A549 (cell line): ENCODE measurements at regions of chr11 and their contacts with region 1.

Region 1: GRCh38 chr11:126480410-126481302 is 125.2 kb downstream of the ST3GAL4 start:
- DNase-seq: peak; percentile 81 to 82
- ATAC-seq: peak; percentile 76 to 91
- H3K4me3 ChIP-seq: no peak overlapping the region
- H3K27ac ChIP-seq: peak overlapping the region; percentile 46 to 84; a peak in 5 of 6 replicates
- H3K4me1 ChIP-seq: peaks cover 20% of the 10 kb centered on the region; the same call in 2 of the 3 replicates
- CTCF ChIP-seq: peak; percentile 61
- EP300 ChIP-seq: no peak
- POLR2A ChIP-seq: no peak
- RAD21 ChIP-seq: peak; percentile 39 to 50; a peak in 4 of 5 replicates

Region 2: DNA sequence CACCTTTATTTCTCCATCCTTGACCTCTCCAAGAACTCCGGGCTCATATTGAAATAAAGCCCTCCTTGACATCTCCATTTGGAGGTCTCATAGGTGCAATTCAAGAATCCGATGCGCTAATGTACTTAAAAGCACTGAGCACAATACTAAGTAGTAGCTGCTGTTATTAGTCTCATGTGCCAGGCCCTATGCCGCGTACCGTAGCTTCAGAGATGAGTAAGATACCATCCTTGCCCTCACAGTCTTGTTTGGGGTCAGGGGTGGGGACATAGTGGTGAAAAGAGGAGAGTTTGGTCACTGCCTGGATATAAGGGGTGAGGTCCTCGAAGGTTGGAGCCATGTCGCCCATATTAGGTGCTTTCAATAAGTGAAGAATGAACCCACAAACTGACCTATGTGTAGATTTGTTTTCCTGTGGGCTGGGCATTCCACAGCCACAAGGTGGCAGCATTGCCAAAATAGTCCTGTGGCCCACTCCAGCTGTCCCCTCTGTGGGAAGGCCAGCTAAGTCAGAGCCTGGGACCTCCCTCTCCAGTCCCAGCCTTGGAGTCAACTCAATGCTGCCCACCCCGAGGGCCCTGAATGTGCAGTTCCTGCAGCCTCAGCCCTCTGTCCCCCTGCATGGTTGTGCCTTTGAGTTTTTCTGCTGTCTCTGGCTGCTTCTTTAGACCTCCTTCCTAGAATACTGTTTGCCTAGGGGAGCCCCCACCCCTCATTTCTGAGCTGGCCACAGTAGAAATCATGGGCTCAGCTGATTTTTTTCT is 170.2 kb before region 1 on chr11:
- CTCF ChIA-PET with region 1: interaction called, 15 read pairs
- POLR2A ChIA-PET with region 1: interaction called, 5 read pairs
- DNase-seq: peak; percentile 60 to 63
- ATAC-seq: peak; percentile 96 to 99
- H3K4me3 ChIP-seq: no peak overlapping the region
- H3K27ac ChIP-seq: no peak overlapping the region
- H3K4me1 ChIP-seq: no peaks in the 10 kb centered on the region
- CTCF ChIP-seq: peak; percentile 70
- EP300 ChIP-seq: no peak
- POLR2A ChIP-seq: no peak
- RAD21 ChIP-seq: peak; percentile 79 to 87

Region 3: GRCh38 chr11:126440792-126441514 is 39.7 kb before region 1 on chr11:
- CTCF ChIA-PET with region 1: interaction called, 36 read pairs
- POLR2A ChIA-PET with region 1: no interaction called
- DNase-seq: peak; percentile 65 to 79
- ATAC-seq: peak; percentile 88 to 94
- H3K4me3 ChIP-seq: no peak overlapping the region
- H3K27ac ChIP-seq: peak overlapping the region in 1 of 2 experiments; percentile 55; a peak in 1 of 6 replicates
- H3K4me1 ChIP-seq: no peaks in the 10 kb centered on the region
- CTCF ChIP-seq: peak; percentile 82
- EP300 ChIP-seq: no peak
- POLR2A ChIP-seq: no peak
- RAD21 ChIP-seq: peak; percentile 87 to 91

Region 4: GRCh38 chr11:126459691-126460281 is 20.9 kb before region 1 on chr11:
- CTCF ChIA-PET with region 1: interaction called, 22 read pairs
- POLR2A ChIA-PET with region 1: no interaction called
- DNase-seq: no peak
- ATAC-seq: no peak
- H3K4me3 ChIP-seq: no peak overlapping the region
- H3K27ac ChIP-seq: no peak overlapping the region
- H3K4me1 ChIP-seq: no peaks in the 10 kb centered on the region
- CTCF ChIP-seq: no peak
- EP300 ChIP-seq: no peak
- POLR2A ChIP-seq: no peak
- RAD21 ChIP-seq: no peak

Region 5: GRCh38 chr11:126465573-126466188 is 15.0 kb before region 1 on chr11:
- CTCF ChIA-PET with region 1: interaction called, 22 read pairs
- POLR2A ChIA-PET with region 1: no interaction called
- DNase-seq: no peak
- ATAC-seq: no peak
- H3K4me3 ChIP-seq: no peak overlapping the region
- H3K27ac ChIP-seq: no peak overlapping the region
- H3K4me1 ChIP-seq: no peaks in the 10 kb centered on the region
- CTCF ChIP-seq: no peak
- EP300 ChIP-seq: no peak
- POLR2A ChIP-seq: no peak
- RAD21 ChIP-seq: no peak

Region 6: GRCh38 chr11:126499131-126499752 is 18.6 kb after region 1 on chr11:
- CTCF ChIA-PET with region 1: interaction called, 10 read pairs
- POLR2A ChIA-PET with region 1: no interaction called
- DNase-seq: no peak
- ATAC-seq: no peak
- H3K4me3 ChIP-seq: no peak overlapping the region
- H3K27ac ChIP-seq: no peak overlapping the region
- H3K4me1 ChIP-seq: no peaks in the 10 kb centered on the region
- CTCF ChIP-seq: no peak
- EP300 ChIP-seq: no peak
- POLR2A ChIP-seq: no peak
- RAD21 ChIP-seq: no peak

Region 7: DNA sequence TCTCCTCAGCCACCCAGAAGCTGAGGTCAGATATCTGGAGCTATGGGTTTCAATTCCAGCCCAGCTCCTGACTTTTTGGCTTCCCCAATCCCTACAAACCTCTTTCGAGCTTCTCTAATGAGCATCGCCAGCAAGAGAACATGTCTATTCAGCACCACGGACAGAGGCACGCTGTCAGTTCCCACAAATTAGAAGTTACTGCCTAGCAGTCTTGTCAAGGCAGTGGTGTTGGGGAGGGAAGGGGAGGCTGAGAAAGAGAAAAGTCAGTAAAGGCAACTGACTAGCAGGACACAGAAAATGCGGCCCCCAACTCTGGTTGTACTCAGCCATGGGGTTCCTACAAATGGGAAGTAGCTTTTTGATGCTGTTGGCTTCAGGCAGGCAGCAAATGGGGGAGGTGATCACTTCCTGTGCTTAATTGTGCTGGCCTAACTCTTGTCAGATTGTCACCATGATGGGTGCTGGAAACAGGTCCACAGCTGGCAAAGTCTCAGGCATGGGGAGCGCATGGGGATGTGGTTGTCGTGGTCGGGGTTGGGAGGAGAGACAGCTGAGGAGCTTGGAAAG is 80.8 kb after region 1 on chr11:
- CTCF ChIA-PET with region 1: no interaction called
- POLR2A ChIA-PET with region 1: no interaction called
- DNase-seq: peak in 1 of 2 experiments; percentile 10
- ATAC-seq: no peak
- H3K4me3 ChIP-seq: no peak overlapping the region
- H3K27ac ChIP-seq: no peak overlapping the region
- H3K4me1 ChIP-seq: no peaks in the 10 kb centered on the region
- CTCF ChIP-seq: no peak
- EP300 ChIP-seq: no peak
- POLR2A ChIP-seq: no peak
- RAD21 ChIP-seq: no peak

Region 8: GRCh38 chr11:126790550-126791081 is 310.0 kb after region 1 on chr11:
- CTCF ChIA-PET with region 1: no interaction called
- POLR2A ChIA-PET with region 1: no interaction called
- DNase-seq: peak in 1 of 2 experiments; percentile 63
- ATAC-seq: peak; percentile 74
- H3K4me3 ChIP-seq: no peak overlapping the region
- H3K27ac ChIP-seq: 0 out of 6 replicates have a peak overlapping the region, but pooled peaks of 1 of the 2 experiments have one; percentile 38
- H3K4me1 ChIP-seq: peaks cover 3% of the 10 kb centered on the region; the same call in 1 of the 3 replicates
- CTCF ChIP-seq: peak; percentile 23; the same call in 2 of the 3 replicates
- EP300 ChIP-seq: no peak
- POLR2A ChIP-seq: no peak
- RAD21 ChIP-seq: 0 out of 5 replicates have a peak, but pooled peaks of 1 of the 2 experiments have one; percentile 19